ENCODE measurements at regions of chr4 and their contacts with region 1.

Region 1: GRCh38 chr4:145618932-145619638 is at the start of gene MMAA:
- DNase-seq: peak; percentile 75
- ATAC-seq: peak; percentile 93
- H3K4me3 ChIP-seq: peak within 1 kb of the TSS; percentile 88
- H3K27ac ChIP-seq: peak within 1 kb of the TSS; percentile 89
- H3K4me1 ChIP-seq: peaks cover 9% of the 10 kb centered on the region; the same call in 1 of the 2 replicates
- H3K27me3 ChIP-seq: no peaks in the 10 kb centered on the region
- CTCF ChIP-seq: peak; percentile 42 to 63 (median 55)
- EP300 ChIP-seq: 0 out of 4 replicates have a peak, but pooled peaks of 1 of the 2 experiments have one; percentile 30
- POLR2A ChIP-seq: peak; percentile 99
- RAD21 ChIP-seq: peak; percentile 47
- polyA plus RNA-seq, gene MMAA: 9.2 to 11.0 TPM

Region 2: GRCh38 chr4:145097821-145098674 is 521.0 kb before region 1 on chr4 and contains the starts of genes ABCE1 and ANAPC10:
- CTCF ChIA-PET with region 1: interaction called, 9 read pairs
- POLR2A ChIA-PET with region 1: no interaction called
- RAD21 ChIA-PET with region 1: interaction called, 3 read pairs
- SMC1A ChIA-PET with region 1: interaction called, 4 read pairs
- in situ Hi-C with region 1: no loop called
- intact Hi-C with region 1: loop called (anchors 5 kb)
- DNase-seq: peak; percentile 87
- ATAC-seq: peak; percentile 83
- H3K4me3 ChIP-seq: peak within 1 kb of the TSS; percentile 94
- H3K27ac ChIP-seq: peak within 1 kb of the TSS; percentile 86
- H3K4me1 ChIP-seq: peaks cover 10% of the 10 kb centered on the region
- H3K27me3 ChIP-seq: no peaks in the 10 kb centered on the region
- CTCF ChIP-seq: no peak; a peak in 1 of 6 replicates
- EP300 ChIP-seq: peak in 1 of 2 experiments; percentile 58; a peak in 1 of 4 replicates
- POLR2A ChIP-seq: peak; percentile 95
- RAD21 ChIP-seq: no peak
- polyA plus RNA-seq, gene ABCE1: 75.9 to 108 TPM
- polyA plus RNA-seq, gene ANAPC10: 60.2 to 73.7 TPM

Region 3: DNA sequence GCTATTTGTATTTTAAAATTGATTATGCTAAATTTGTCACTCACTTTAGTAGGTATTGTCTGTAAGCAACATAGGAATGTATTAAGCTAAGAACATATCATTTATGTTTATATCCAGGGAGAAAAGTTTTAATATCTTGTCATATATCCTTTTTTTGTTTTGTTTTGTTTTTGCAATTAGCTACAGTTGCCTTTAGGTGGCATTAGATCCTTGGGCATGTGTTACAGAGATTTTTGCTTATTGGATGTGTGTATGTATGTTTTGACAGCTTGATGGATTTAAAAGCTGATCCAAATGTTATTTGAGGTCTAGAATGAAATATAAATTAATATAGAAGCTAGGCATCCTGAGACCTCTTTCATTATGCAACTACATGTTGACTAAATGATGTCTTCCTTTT is 402.6 kb before region 1 on chr4:
- CTCF ChIA-PET with region 1: interaction called, 55 read pairs
- POLR2A ChIA-PET with region 1: interaction called, 4 read pairs
- RAD21 ChIA-PET with region 1: interaction called, 24 read pairs
- SMC1A ChIA-PET with region 1: interaction called, 35 read pairs
- in situ Hi-C with region 1: no loop called
- intact Hi-C with region 1: no loop called
- DNase-seq: no peak
- ATAC-seq: 0 out of 3 replicates have a peak, but pooled peaks have one; percentile 46
- H3K4me3 ChIP-seq: no peak overlapping the region
- H3K27ac ChIP-seq: no peak overlapping the region
- H3K4me1 ChIP-seq: peaks cover 3% of the 10 kb centered on the region; the same call in 1 of the 2 replicates
- H3K27me3 ChIP-seq: no peaks in the 10 kb centered on the region
- CTCF ChIP-seq: peak; percentile 45 to 59 (median 50); a peak in 5 of 6 replicates
- EP300 ChIP-seq: no peak
- POLR2A ChIP-seq: no peak
- RAD21 ChIP-seq: peak; percentile 88

Region 4: DNA sequence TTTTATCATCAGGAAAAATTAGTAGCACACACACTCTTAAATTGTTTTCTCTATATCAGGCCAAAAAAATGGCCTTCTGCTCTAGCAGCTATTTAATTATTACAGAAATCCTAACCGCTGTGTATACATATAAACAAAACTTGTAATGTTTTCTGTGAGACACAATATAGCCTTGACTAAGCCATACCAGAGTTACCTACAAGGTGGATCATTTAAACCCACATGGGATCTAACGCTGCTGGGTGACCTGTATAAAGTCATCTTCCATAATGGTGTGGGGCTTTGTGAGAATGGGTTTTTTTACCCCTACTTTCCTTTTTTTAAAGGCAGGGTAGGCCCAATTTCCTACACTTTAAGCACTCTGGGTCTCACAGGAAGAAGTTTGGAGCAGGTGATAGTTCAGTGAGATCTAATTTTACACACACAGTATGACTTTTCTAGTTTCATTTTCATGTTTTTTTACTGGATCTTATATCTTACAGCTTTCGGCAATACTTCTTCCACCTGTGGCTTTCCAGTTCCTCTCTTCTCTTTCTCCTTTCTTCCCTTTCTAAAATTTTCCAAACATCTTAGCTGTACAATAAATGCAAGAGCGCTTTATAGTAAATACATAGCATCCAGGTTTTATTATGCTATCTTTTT is 66.8 kb before region 1 on chr4:
- CTCF ChIA-PET with region 1: interaction called, 23 read pairs
- POLR2A ChIA-PET with region 1: no interaction called
- RAD21 ChIA-PET with region 1: interaction called, 10 read pairs
- SMC1A ChIA-PET with region 1: interaction called, 17 read pairs
- in situ Hi-C with region 1: no loop called
- intact Hi-C with region 1: loop called (anchors 5 kb)
- DNase-seq: peak; percentile 23
- ATAC-seq: peak; percentile 77
- H3K4me3 ChIP-seq: peak overlapping the region; percentile 31; the same call in 1 of the 2 replicates
- H3K27ac ChIP-seq: peak overlapping the region; percentile 61
- H3K4me1 ChIP-seq: peaks cover 12% of the 10 kb centered on the region
- H3K27me3 ChIP-seq: no peaks in the 10 kb centered on the region
- CTCF ChIP-seq: no peak
- EP300 ChIP-seq: no peak
- POLR2A ChIP-seq: no peak
- RAD21 ChIP-seq: no peak

Region 5: GRCh38 chr4:145635630-145636029 is 16.5 kb after region 1 on chr4:
- CTCF ChIA-PET with region 1: interaction called, 12 read pairs
- POLR2A ChIA-PET with region 1: interaction called, 9 read pairs
- RAD21 ChIA-PET with region 1: interaction called, 6 read pairs
- SMC1A ChIA-PET with region 1: interaction called, 20 read pairs
- in situ Hi-C with region 1: no loop called
- intact Hi-C with region 1: no loop called
- DNase-seq: no peak
- ATAC-seq: peak; percentile 50
- H3K4me3 ChIP-seq: no peak overlapping the region
- H3K27ac ChIP-seq: no peak overlapping the region
- H3K4me1 ChIP-seq: peaks cover 6% of the 10 kb centered on the region
- H3K27me3 ChIP-seq: no peaks in the 10 kb centered on the region
- CTCF ChIP-seq: no peak
- EP300 ChIP-seq: no peak
- POLR2A ChIP-seq: no peak
- RAD21 ChIP-seq: no peak

Region 6: GRCh38 chr4:145808021-145808650 is 189.1 kb after region 1 on chr4:
- CTCF ChIA-PET with region 1: interaction called, 3 read pairs
- POLR2A ChIA-PET with region 1: interaction called, 3 read pairs
- RAD21 ChIA-PET with region 1: interaction called, 5 read pairs
- SMC1A ChIA-PET with region 1: interaction called, 12 read pairs
- in situ Hi-C with region 1: no loop called
- intact Hi-C with region 1: loop called (anchors 2 kb)
- DNase-seq: peak; percentile 86
- ATAC-seq: peak; percentile 87
- H3K4me3 ChIP-seq: peak overlapping the region; percentile 18; the same call in 1 of the 2 replicates
- H3K27ac ChIP-seq: peak overlapping the region; percentile 90
- H3K4me1 ChIP-seq: peaks cover 36% of the 10 kb centered on the region
- H3K27me3 ChIP-seq: no peaks in the 10 kb centered on the region
- CTCF ChIP-seq: no peak
- EP300 ChIP-seq: peak; percentile 87 to 91
- POLR2A ChIP-seq: no peak
- RAD21 ChIP-seq: peak; percentile 34; the same call in 1 of the 2 replicates

Region 7: GRCh38 chr4:145936142-145936996 is 317.3 kb after region 1 on chr4:
- CTCF ChIA-PET with region 1: no interaction called
- POLR2A ChIA-PET with region 1: interaction called, 4 read pairs
- RAD21 ChIA-PET with region 1: interaction called, 10 read pairs
- SMC1A ChIA-PET with region 1: no interaction called
- in situ Hi-C with region 1: no loop called
- intact Hi-C with region 1: loop called (anchors 2 kb)
- DNase-seq: no peak
- ATAC-seq: peak; percentile 70
- H3K4me3 ChIP-seq: peak overlapping the region; percentile 93
- H3K27ac ChIP-seq: peak overlapping the region; percentile 88
- H3K4me1 ChIP-seq: no peaks in the 10 kb centered on the region
- H3K27me3 ChIP-seq: no peaks in the 10 kb centered on the region
- CTCF ChIP-seq: peak; percentile 2 to 34 (median 19); a peak in 1 of 6 replicates
- EP300 ChIP-seq: no peak
- POLR2A ChIP-seq: peak; percentile 68; the same call in 1 of the 2 replicates
- RAD21 ChIP-seq: 0 out of 2 replicates have a peak, but pooled peaks have one; percentile 17